Astrocyte of the cerebellum (primary cell): ENCODE measurements at regions of chr5 and their contacts with region 1.

Region 1: GRCh38 chr5:33049845-33050244 is 338.7 kb downstream of the NPR3 start:
- DNase-seq: peak; percentile 39
- H3K4me3 ChIP-seq: no peak overlapping the region
- CTCF ChIP-seq: no peak

Region 2: DNA sequence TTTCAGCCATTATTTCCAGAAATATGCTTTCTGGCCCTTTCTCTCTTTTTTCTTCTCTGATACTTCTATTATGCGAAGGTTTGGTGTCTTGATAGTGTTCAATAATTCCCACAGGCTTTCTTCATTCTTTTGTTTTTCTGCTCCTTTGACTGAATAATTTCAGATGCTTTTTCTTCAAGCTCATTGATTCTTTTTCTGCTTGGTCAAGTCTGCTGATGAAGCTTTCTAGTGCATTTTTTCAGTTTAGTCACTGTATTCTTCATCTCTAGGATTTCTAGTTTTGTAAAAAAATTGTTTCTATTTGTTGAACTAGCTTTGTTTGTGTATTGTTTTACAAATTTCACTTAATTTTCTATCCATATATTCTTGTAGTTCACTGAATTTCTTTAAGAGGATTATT is 86.9 kb after region 1 on chr5:
- in situ Hi-C with region 1: loop called (anchors 5 kb)
- DNase-seq: no peak
- H3K4me3 ChIP-seq: no peak overlapping the region
- CTCF ChIP-seq: no peak